CD14-positive monocyte (primary cell): ENCODE measurements at regions of chr2 and their contacts with region 1.

Region 1: GRCh38 chr2:102291318-102292251 is 19.8 kb upstream of the IL1RL1 start:
- DNase-seq: peak; percentile 66 to 86 (median 70)
- H3K4me3 ChIP-seq: peak overlapping the region in 1 of 3 experiments; percentile 28
- H3K4me3 Mint-ChIP-seq: peak overlapping the region in 1 of 2 donors; percentile 86
- H3K27ac ChIP-seq: no peak overlapping the region
- H3K27ac Mint-ChIP-seq: peak overlapping the region in 4 of 7 donors; percentile 22 to 70 (median 32)
- H3K4me1 ChIP-seq: peaks cover 47 to 54% of the 10 kb centered on the region in 2 donors
- H3K4me1 Mint-ChIP-seq: peaks cover 51% of the 10 kb centered on the region
- H3K27me3 ChIP-seq: peaks cover 54 to 70% of the 10 kb centered on the region in 2 donors
- H3K27me3 Mint-ChIP-seq: peaks cover 69 to 78% (median 75%) of the 10 kb centered on the region in 3 donors
- CTCF ChIP-seq: no peak

Region 2: DNA sequence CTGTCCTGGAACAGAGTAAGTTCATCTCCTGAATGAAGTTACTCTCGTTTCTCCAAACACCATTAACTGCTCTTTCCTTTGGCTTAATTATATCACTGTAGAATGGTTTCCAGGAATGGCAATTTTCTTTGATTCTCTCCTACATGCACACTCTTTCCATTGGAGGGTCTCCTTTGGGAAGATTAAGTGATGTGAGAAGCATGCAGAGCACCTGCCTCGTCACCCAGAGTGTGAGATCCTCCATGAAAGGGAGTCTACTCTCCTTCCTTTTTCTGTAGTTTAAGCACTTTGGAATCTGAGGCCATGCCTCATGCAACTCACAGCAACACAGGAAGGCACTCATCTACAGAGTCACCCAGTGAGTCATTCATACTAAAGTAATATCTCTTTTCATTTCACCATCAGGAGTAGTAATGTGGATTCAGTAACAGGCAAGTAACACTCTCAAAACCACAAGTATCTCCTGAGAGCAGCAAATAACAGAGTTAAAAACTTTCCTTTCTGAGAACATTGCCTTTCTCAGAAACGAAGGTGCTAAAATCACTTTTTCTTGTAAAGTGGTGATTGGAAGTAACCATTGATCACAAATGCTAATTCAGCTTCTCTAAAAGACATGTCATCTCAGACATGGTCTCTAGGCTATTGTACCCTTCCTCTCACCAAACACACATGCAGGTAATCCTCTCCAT is 33.1 kb before region 1 on chr2:
- intact Hi-C with region 1: loop called in 1 of 2 experiments (anchors 5 kb)
- DNase-seq: peak; percentile 78 to 85 (median 81)
- H3K4me3 ChIP-seq: no peak overlapping the region
- H3K4me3 Mint-ChIP-seq: peak overlapping the region in 1 of 2 donors; percentile 70
- H3K27ac ChIP-seq: no peak overlapping the region
- H3K27ac Mint-ChIP-seq: peak overlapping the region in 5 of 7 donors; percentile 63 to 83 (median 80)
- H3K4me1 ChIP-seq: peaks cover 16 to 26% of the 10 kb centered on the region in 2 donors
- H3K4me1 Mint-ChIP-seq: peaks cover 15% of the 10 kb centered on the region
- H3K27me3 ChIP-seq: peaks cover 3 to 6% of the 10 kb centered on the region in 2 donors
- H3K27me3 Mint-ChIP-seq: peaks cover 11 to 17% (median 12%) of the 10 kb centered on the region in 3 donors
- CTCF ChIP-seq: no peak